GM13977 (cell line): ENCODE measurements at regions of chr12 and their contacts with region 1.

Region 1: DNA sequence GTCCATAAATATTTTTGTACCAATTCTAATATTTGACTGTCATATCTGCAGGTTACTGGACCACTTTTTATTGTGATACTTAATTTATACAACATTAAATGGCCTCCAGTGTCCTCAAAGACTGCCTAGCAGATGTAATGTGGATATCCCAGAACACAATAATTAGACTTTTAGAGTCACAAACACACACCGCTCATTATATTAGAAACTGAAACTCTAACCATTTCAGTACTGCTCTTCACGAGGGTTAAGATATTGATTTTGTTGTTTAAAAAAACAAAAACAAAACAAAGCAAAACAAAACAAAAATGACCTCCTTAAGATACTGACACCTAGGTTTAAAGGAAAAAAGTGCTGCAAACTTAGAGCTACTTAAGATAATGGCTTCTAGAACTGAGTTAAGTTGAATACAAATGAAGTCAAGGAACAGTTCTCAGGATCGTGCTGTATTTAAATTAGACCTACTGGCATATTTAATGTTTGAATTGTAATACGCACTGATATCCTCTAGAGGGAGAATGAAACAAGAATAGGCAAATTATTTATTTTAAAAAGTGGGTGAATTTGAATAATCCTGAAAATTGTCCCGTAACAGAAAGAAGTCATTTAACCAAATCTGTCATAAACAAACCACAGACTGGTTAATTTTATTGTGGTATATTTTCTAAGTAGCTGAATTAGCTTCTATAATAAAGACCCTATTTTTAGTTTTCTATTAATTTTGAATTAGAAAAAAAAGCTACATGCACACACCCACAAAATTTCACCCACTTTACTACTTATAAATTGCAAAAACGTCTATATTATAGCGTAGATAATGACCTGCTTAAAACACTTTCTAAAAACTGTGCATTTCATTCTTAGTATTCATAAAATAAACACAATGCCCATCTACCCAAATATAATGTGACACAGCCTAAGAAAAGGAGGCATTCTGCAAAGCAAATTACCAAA is 395.2 kb upstream of the DCN start:
- DNase-seq: peak; percentile 37
- CTCF ChIP-seq: peak; percentile 49

Region 2: DNA sequence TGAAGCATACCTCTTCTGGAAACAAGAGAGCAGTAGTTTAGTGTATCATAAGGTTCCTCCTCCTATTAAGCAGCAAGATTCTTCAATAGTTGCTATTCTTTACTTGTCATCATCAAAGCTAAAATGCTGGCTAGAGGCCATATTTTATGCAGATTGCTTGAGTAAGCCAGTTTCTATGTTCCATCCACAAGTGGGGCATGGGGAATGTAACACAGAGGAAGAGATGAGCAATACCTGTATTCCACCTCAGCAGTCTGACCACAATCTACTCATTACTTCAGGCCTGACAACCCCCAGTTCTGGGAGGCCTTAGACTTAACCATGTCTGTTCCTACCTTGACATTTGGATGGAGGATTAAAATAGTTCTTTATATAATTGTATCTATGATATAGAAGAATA is 144.2 kb after region 1 on chr12:
- in situ Hi-C with region 1: no loop called
- DNase-seq: no peak
- CTCF ChIP-seq: no peak

Region 3: DNA sequence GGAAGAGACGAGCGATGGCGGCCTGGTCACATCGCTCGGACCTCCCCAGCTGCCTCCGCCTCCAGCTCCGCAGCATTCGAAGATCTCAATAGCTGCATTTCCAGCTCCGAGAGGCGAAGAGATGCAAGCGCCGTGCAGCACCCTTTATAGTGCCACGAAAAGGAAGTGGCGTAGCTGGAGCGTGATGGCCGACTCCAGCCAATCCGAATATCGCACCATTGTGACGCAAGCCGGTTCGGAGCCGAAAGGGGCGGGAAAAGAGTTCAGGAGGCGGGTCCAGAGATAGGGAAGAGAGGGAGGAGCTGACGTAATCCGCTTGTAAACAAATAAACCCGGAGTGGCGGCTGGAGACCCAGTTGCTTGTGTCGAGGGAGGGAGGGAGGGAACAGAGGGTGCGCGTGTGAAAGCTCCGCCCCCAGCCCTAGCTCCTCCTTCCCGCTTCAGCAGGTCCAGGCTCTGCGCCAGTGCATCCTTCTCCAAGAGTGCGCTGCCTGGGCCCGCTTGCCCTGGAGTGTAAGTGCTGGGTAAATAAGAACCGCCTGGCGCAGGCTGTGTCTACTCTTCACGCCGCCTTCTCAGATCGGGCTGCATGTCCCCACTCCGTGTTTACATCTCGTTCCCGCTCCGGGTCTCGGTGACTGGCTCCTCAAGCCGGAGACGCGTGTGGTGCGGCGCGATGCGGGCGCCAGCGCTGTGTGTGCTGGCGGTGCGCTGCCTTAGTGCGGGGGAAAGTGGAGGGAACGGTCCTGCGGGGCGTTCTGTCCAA is 568.1 kb after region 1 on chr12 and contains the start of gene BTG1:
- in situ Hi-C with region 1: loop called (anchors 25 kb)
- DNase-seq: peak; percentile 98
- CTCF ChIP-seq: no peak